ENCODE measurements at regions of chr4 and their contacts with region 1.

Region 1: GRCh38 chr4:37686373-37687193 is at the start of gene RELL1:
- DNase-seq: peak; percentile 95
- ATAC-seq: peak; percentile 86
- H3K4me3 Mint-ChIP-seq: peak within 1 kb of the TSS; percentile 97
- H3K27ac Mint-ChIP-seq: peak within 1 kb of the TSS; percentile 80
- H3K4me1 Mint-ChIP-seq: peaks cover 41% of the 10 kb centered on the region
- H3K27me3 Mint-ChIP-seq: peaks cover 8% of the 10 kb centered on the region
- CTCF ChIP-seq: no peak
- total RNA-seq, gene RELL1: 0.71 and 1.0 TPM in 2 replicates

Region 2: GRCh38 chr4:36255577-36255976 is 1431.0 kb before region 1 on chr4:
- CTCF ChIA-PET with region 1: no interaction called
- POLR2A ChIA-PET with region 1: no interaction called
- intact Hi-C with region 1: loop called (anchors 10 kb)
- DNase-seq: no peak
- ATAC-seq: peak; percentile 90
- H3K4me3 Mint-ChIP-seq: peak overlapping the region; percentile 81
- H3K27ac Mint-ChIP-seq: peak overlapping the region; percentile 95
- H3K4me1 Mint-ChIP-seq: peaks cover 32% of the 10 kb centered on the region
- H3K27me3 Mint-ChIP-seq: no peaks in the 10 kb centered on the region
- CTCF ChIP-seq: no peak

Region 3: DNA sequence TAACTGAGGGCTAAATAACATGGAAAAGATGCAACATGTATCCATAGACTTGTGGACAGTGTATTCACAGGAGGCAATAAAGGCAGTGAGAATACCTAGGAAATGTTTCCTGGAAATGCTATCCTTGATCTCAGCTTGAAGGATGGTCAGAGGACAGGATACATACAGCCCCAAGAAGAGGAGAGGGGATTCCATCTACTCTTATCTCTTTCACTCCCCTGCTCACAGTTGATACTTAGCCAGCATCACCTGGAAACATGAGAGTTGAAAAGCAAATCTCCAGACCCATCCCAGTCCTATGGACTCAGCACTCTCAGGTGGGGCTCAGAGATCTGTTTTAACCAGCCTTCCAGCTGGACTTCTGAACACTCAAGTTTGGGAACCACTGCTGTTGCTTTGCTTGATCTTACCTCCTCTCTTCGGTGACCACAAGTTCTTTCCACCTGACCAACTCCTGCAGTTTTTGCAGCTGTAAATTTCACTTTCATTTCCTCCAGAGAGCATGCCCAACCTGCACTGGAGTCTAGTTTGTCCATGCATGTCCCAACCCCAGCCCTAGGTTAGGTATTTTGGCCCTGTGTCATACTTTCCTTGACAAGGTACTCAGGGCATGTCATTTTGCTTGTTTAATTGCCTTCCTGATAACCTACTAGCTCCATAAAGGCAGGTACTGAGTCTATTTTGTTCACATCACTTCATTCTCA is 10.8 kb before region 1 on chr4:
- CTCF ChIA-PET with region 1: no interaction called
- POLR2A ChIA-PET with region 1: no interaction called
- intact Hi-C with region 1: loop called (anchors 1 kb)
- DNase-seq: peak; percentile 15
- ATAC-seq: peak; percentile 92
- H3K4me3 Mint-ChIP-seq: peak overlapping the region; percentile 50
- H3K27ac Mint-ChIP-seq: peak overlapping the region; percentile 67
- H3K4me1 Mint-ChIP-seq: peaks cover 29% of the 10 kb centered on the region
- H3K27me3 Mint-ChIP-seq: peaks cover 9% of the 10 kb centered on the region
- CTCF ChIP-seq: no peak

Region 4: GRCh38 chr4:37826295-37827029 is 139.9 kb after region 1 on chr4 and contains the start of gene PGM2:
- CTCF ChIA-PET with region 1: no interaction called
- POLR2A ChIA-PET with region 1: interaction called, 4 read pairs
- intact Hi-C with region 1: loop called (anchors 1 kb)
- DNase-seq: peak; percentile 91
- ATAC-seq: peak; percentile 96
- H3K4me3 Mint-ChIP-seq: peak within 1 kb of the TSS; percentile 100
- H3K27ac Mint-ChIP-seq: peak within 1 kb of the TSS; percentile 98
- H3K4me1 Mint-ChIP-seq: peaks cover 27% of the 10 kb centered on the region
- H3K27me3 Mint-ChIP-seq: no peaks in the 10 kb centered on the region
- CTCF ChIP-seq: no peak
- total RNA-seq, gene PGM2: 26.4 and 29.6 TPM in 2 replicates

Region 5: GRCh38 chr4:38034986-38035882 is 348.7 kb after region 1 on chr4:
- CTCF ChIA-PET with region 1: no interaction called
- POLR2A ChIA-PET with region 1: no interaction called
- intact Hi-C with region 1: loop called (anchors 10 kb)
- DNase-seq: no peak
- ATAC-seq: peak; percentile 60
- H3K4me3 Mint-ChIP-seq: no peak overlapping the region
- H3K27ac Mint-ChIP-seq: no peak overlapping the region
- H3K4me1 Mint-ChIP-seq: peaks cover 2% of the 10 kb centered on the region
- H3K27me3 Mint-ChIP-seq: no peaks in the 10 kb centered on the region
- CTCF ChIP-seq: peak; percentile 67